ENCODE measurements at regions of chr20 and their contacts with region 1.

Region 1: GRCh38 chr20:10536531-10536930 is 101.4 kb downstream of the SLX4IP start:
- DNase-seq: peak in 1 of 2 experiments; percentile 47
- H3K4me3 ChIP-seq: no peak overlapping the region
- H3K27ac ChIP-seq: no peak overlapping the region
- H3K4me1 ChIP-seq: peaks cover 0 to 3% (median 1%) of the 10 kb centered on the region in 4 experiments; a peak in 3 of 7 replicates
- H3K27me3 ChIP-seq: no peaks in the 10 kb centered on the region
- CTCF ChIP-seq: peak in 2 of 3 experiments; percentile 80 to 81; a peak in 3 of 4 replicates
- EP300 ChIP-seq: no peak
- POLR2A ChIP-seq: no peak
- RAD21 ChIP-seq: peak; percentile 87 to 91

Region 2: GRCh38 chr20:10297684-10298240 is 238.8 kb before region 1 on chr20:
- CTCF ChIA-PET with region 1: no interaction called
- POLR2A ChIA-PET with region 1: no interaction called
- DNase-seq: no peak
- H3K4me3 ChIP-seq: no peak overlapping the region
- H3K27ac ChIP-seq: no peak overlapping the region
- H3K4me1 ChIP-seq: peaks cover 0 to 12% (median 2%) of the 10 kb centered on the region in 4 experiments; a peak in 2 of 7 replicates
- H3K27me3 ChIP-seq: peaks cover 0 to 5% (median 0%) of the 10 kb centered on the region in 4 experiments; a peak in 2 of 7 replicates
- CTCF ChIP-seq: no peak
- EP300 ChIP-seq: no peak
- POLR2A ChIP-seq: no peak
- RAD21 ChIP-seq: no peak

Region 3: GRCh38 chr20:10469599-10469998 is 66.9 kb before region 1 on chr20:
- CTCF ChIA-PET with region 1: interaction called, 26 read pairs
- POLR2A ChIA-PET with region 1: no interaction called
- DNase-seq: peak in 1 of 2 experiments; percentile 23
- H3K4me3 ChIP-seq: no peak overlapping the region; a peak in 1 of 8 replicates
- H3K27ac ChIP-seq: no peak overlapping the region
- H3K4me1 ChIP-seq: peaks cover 0 to 30% (median 22%) of the 10 kb centered on the region in 4 experiments; a peak in 6 of 7 replicates
- H3K27me3 ChIP-seq: no peaks in the 10 kb centered on the region
- CTCF ChIP-seq: peak in 2 of 3 experiments; percentile 57 to 66; a peak in 2 of 4 replicates
- EP300 ChIP-seq: no peak
- POLR2A ChIP-seq: no peak
- RAD21 ChIP-seq: peak; percentile 75 to 76

Region 4: GRCh38 chr20:10476319-10476724 is 60.2 kb before region 1 on chr20:
- CTCF ChIA-PET with region 1: interaction called, 17 read pairs
- POLR2A ChIA-PET with region 1: no interaction called
- DNase-seq: no peak
- H3K4me3 ChIP-seq: no peak overlapping the region
- H3K27ac ChIP-seq: no peak overlapping the region
- H3K4me1 ChIP-seq: peaks cover 0 to 13% (median 3%) of the 10 kb centered on the region in 4 experiments; a peak in 4 of 7 replicates
- H3K27me3 ChIP-seq: no peaks in the 10 kb centered on the region
- CTCF ChIP-seq: no peak
- EP300 ChIP-seq: no peak
- POLR2A ChIP-seq: no peak
- RAD21 ChIP-seq: no peak; a peak in 1 of 4 replicates

Region 5: DNA sequence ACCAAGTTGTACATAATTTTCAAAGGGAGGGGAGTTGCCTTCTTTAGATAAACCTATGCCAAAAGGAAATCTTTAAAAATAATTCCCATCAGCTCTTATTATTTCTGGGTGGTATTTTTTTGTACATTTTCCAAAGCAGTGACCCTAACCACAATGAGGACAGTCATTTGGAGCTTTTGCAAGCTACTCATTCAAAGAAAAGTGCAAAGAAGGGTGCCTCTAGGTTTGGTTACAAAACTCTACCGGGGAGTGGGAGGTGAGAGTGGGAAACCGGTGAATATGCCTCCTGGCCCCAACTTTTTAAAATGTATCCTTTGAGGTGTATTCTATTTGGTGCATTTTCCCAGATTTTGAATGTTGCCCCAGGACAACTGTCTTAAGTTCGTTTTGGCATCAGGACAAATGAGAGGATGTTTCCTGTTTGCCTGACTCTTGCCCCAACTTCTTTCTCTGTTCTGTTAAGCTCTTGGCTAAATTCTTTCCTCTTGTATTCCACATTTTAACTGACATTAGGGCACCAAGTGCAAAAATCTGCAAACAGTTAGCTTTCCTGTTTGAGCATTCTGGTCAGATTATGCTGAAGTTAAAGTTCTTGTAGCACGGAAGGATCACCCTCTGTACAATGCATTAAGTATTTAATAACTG is 22.5 kb before region 1 on chr20:
- CTCF ChIA-PET with region 1: interaction called, 19 read pairs
- POLR2A ChIA-PET with region 1: no interaction called
- DNase-seq: no peak
- H3K4me3 ChIP-seq: no peak overlapping the region
- H3K27ac ChIP-seq: no peak overlapping the region
- H3K4me1 ChIP-seq: peaks cover 0 to 11% (median 5%) of the 10 kb centered on the region in 4 experiments; a peak in 4 of 7 replicates
- H3K27me3 ChIP-seq: no peaks in the 10 kb centered on the region
- CTCF ChIP-seq: no peak
- EP300 ChIP-seq: no peak
- POLR2A ChIP-seq: no peak
- RAD21 ChIP-seq: no peak

Region 6: GRCh38 chr20:10521068-10521831 is 15.3 kb before region 1 on chr20:
- CTCF ChIA-PET with region 1: interaction called, 19 read pairs
- POLR2A ChIA-PET with region 1: no interaction called
- DNase-seq: no peak
- H3K4me3 ChIP-seq: no peak overlapping the region
- H3K27ac ChIP-seq: peak overlapping the region; percentile 10; the same call in 1 of the 2 replicates
- H3K4me1 ChIP-seq: peaks cover 5 to 12% (median 8%) of the 10 kb centered on the region in 4 experiments
- H3K27me3 ChIP-seq: no peaks in the 10 kb centered on the region
- CTCF ChIP-seq: no peak
- EP300 ChIP-seq: no peak
- POLR2A ChIP-seq: no peak
- RAD21 ChIP-seq: no peak

Region 7: DNA sequence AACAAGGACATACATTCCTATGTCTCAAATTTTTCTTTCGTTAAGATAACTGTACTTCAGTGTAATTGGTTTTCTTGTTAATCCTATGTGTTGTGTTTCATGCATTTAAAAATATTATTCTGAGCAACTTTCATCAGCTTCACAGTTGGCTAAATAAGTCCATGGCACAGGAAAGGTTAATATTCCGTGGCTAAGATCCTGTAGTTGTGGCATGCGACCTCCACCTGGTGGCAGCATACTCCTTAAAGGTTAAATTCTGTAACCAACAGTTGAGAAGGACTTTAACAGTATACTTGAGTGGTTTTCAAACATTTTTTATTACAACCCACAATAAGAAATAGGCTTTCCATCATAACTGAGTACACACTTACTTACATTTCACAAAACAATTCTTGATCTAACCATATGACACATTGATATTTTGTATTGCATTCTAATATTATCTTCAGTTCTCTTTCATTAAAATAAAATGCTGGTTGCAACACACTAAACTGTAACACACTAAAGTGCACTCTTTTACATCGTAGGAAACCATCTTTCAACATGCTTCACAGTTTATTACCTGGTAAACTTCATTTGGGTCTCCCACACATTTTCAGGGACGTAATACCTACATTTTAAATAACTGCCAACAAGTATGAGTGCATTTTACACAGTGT is 16.9 kb after region 1 on chr20:
- CTCF ChIA-PET with region 1: interaction called, 12 read pairs
- POLR2A ChIA-PET with region 1: no interaction called
- DNase-seq: no peak
- H3K4me3 ChIP-seq: no peak overlapping the region
- H3K27ac ChIP-seq: no peak overlapping the region
- H3K4me1 ChIP-seq: peaks cover 6 to 22% (median 16%) of the 10 kb centered on the region in 4 experiments
- H3K27me3 ChIP-seq: no peaks in the 10 kb centered on the region
- CTCF ChIP-seq: peak; percentile 15 to 81 (median 63)
- EP300 ChIP-seq: no peak
- POLR2A ChIP-seq: no peak
- RAD21 ChIP-seq: peak; percentile 83 to 89

Region 8: DNA sequence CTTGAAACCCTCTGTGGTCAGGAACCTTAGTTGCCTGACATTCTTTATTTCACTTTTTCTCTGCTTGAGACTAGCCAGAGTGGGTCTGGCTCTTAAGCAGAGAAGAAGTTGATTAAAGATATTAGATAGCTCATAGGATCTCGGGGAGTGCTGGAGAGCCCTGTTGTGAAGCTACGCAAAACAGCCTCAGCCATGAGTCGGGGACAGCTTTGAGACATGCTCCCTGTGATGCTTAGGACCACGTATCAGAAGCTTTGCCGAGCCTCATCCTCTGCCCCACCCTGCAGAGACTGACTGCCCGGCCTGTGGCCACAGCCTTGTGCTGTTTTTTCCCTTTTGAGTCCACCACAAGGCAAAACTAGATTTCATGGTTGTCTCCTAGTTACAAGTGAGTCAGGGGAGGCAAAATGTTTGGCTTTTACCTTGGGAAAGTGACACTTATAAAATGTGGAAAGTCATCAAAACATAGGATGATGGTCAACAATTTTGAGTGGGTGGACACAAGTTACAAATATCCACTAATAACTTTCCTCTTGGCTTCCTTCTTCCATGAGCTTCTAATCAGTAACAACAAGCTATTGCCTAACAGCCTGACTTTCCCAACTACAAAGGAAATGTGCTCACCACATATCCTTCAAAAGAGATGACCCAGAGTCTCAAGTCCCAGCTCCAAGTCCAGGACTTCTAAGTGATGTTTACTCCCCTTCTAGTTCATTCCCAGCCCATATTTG is 28.8 kb after region 1 on chr20:
- CTCF ChIA-PET with region 1: no interaction called
- POLR2A ChIA-PET with region 1: no interaction called
- DNase-seq: no peak
- H3K4me3 ChIP-seq: no peak overlapping the region
- H3K27ac ChIP-seq: no peak overlapping the region
- H3K4me1 ChIP-seq: peaks cover 0 to 4% (median 0%) of the 10 kb centered on the region in 4 experiments; a peak in 1 of 7 replicates
- H3K27me3 ChIP-seq: no peaks in the 10 kb centered on the region
- CTCF ChIP-seq: no peak
- EP300 ChIP-seq: no peak
- POLR2A ChIP-seq: no peak
- RAD21 ChIP-seq: no peak

Measured in H1 (cell line).